Esophagus muscularis mucosa (tissue), 4 donors: ENCODE measurements at regions of chr6 and their contacts with region 1.

Region 1: GRCh38 chr6:85923013-85923430 is 280.3 kb upstream of the SYNCRIP start:
- DNase-seq: no peak
- H3K4me3 ChIP-seq: no peak overlapping the region
- H3K27ac ChIP-seq: no peak overlapping the region
- H3K4me1 ChIP-seq: peaks cover 0 to 25% (median 15%) of the 10 kb centered on the region in 4 donors
- H3K27me3 ChIP-seq: no peaks in the 10 kb centered on the region
- CTCF ChIP-seq: peak; percentile 51 to 75 (median 60)
- EP300 ChIP-seq: no peak
- POLR2A ChIP-seq: no peak

Region 2: GRCh38 chr6:85186546-85187175 is 736.4 kb before region 1 on chr6:
- intact Hi-C with region 1: no loop called
- DNase-seq: no peak
- H3K4me3 ChIP-seq: no peak overlapping the region
- H3K27ac ChIP-seq: no peak overlapping the region
- H3K4me1 ChIP-seq: no peaks in the 10 kb centered on the region
- H3K27me3 ChIP-seq: no peaks in the 10 kb centered on the region
- CTCF ChIP-seq: no peak
- EP300 ChIP-seq: no peak
- POLR2A ChIP-seq: no peak

Region 3: DNA sequence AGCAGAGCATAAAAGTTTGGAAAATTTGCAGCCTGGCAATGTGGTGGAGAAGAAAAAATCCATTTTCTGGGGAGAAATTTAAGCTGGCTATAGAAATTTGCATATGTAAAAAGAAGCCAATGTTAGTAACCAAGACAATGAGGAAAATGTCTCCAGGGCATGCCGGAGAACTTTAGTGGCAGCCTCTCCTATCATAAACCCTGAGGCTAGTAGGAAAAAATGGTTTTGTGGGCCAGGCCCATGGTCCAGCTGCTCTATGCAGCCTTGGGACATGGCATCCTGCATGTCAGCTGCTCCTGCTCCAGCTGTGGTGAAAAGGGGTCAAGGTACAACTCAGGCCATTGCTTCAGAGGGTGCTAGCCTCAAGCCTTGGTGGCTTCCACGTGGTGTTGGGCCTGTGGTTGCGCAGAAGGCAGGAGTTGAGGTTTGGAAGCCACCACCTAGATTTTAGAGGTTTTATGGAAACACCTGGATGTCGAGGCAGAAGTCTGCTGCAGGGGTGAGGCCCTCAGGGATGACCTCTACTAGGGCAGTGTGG is 178.5 kb before region 1 on chr6:
- intact Hi-C with region 1: no loop called
- DNase-seq: no peak
- H3K4me3 ChIP-seq: no peak overlapping the region
- H3K27ac ChIP-seq: no peak overlapping the region
- H3K4me1 ChIP-seq: no peaks in the 10 kb centered on the region
- H3K27me3 ChIP-seq: no peaks in the 10 kb centered on the region
- CTCF ChIP-seq: no peak
- EP300 ChIP-seq: no peak
- POLR2A ChIP-seq: no peak

Region 4: GRCh38 chr6:86031713-86032112 is 108.7 kb after region 1 on chr6:
- intact Hi-C with region 1: no loop called
- DNase-seq: no peak
- H3K4me3 ChIP-seq: no peak overlapping the region
- H3K27ac ChIP-seq: no peak overlapping the region
- H3K4me1 ChIP-seq: peaks cover 0 to 18% (median 8%) of the 10 kb centered on the region in 4 donors
- H3K27me3 ChIP-seq: no peaks in the 10 kb centered on the region
- CTCF ChIP-seq: no peak
- EP300 ChIP-seq: no peak
- POLR2A ChIP-seq: no peak

Region 5: DNA sequence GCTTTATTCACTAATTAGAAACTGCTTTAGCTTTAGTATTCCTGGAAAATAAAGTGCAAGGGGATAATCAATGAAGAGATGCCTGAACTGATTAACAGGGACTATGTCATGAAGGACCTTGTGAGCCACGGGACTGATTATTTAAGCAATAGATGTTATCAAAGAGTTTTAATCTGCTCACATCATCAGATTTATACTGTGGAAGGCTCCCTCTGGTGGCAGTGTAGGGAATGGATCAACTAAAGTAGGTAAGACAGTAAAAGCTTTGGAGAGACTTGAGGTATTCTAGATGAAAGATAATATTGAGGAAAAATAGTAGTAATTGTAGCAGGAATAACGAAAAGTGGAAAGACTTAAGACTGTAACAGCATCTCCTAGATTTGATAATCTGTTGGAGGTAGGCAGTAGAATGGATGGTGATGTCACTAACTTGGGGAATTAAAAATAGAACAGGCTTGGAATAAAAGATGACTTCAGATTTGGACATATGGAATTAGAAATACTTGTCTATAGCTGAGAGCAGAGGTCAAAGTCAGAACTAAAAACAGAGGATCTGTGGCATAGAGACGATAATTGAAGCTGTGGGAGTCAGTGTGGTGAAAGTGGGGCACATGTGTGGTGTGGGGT is 934.0 kb after region 1 on chr6:
- intact Hi-C with region 1: loop called (anchors 2 kb)
- DNase-seq: no peak
- H3K4me3 ChIP-seq: no peak overlapping the region
- H3K27ac ChIP-seq: no peak overlapping the region
- H3K4me1 ChIP-seq: peaks cover 0 to 12% (median 3%) of the 10 kb centered on the region in 4 donors
- H3K27me3 ChIP-seq: no peaks in the 10 kb centered on the region
- CTCF ChIP-seq: peak; percentile 54 to 76 (median 73)
- EP300 ChIP-seq: no peak
- POLR2A ChIP-seq: no peak

Region 6: GRCh38 chr6:86937219-86938079 is 1014.4 kb after region 1 on chr6 and contains the start of gene HTR1E:
- intact Hi-C with region 1: loop called (anchors 2 kb)
- DNase-seq: peak; percentile 91
- H3K4me3 ChIP-seq: peak within 1 kb of the TSS; percentile 48 to 61 (median 51)
- H3K27ac ChIP-seq: peak within 1 kb of the TSS in 1 of 4 donors; percentile 6
- H3K4me1 ChIP-seq: peaks cover 0 to 16% (median 14%) of the 10 kb centered on the region in 4 donors
- H3K27me3 ChIP-seq: peaks cover 0 to 33% (median 0%) of the 10 kb centered on the region in 4 donors
- CTCF ChIP-seq: peak; percentile 40 to 68 (median 46)
- EP300 ChIP-seq: no peak
- POLR2A ChIP-seq: no peak
- total RNA-seq, gene HTR1E: 0.17 to 0.40 (median 0.19) TPM in 3 of 4 donors, not detected in the other

Region 7: DNA sequence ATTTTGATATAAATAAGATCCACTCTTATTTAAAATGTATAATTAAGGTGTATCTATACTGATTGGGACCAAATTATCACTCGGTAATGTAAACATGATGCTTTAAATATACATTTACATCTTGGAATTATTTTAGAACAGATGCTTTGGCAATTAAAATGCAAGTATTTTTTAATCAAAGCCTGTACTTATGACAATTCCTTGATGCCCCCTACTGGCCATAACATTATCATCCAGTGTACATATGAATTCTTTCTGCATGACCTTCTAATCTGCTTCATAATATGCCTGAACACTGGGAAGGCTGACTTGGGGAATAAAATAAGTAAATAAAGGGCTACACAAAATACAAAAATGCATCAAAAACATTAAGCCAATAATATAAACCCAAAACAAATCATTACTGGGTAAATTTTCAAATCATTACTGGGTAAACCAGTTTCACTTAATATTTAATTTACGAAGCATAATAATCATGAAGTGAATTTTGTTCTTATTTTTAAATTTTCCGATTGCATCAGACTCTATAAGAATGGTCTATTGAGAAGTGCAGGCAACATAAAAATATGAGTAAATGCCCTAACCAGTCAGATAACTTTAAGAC is 1106.8 kb after region 1 on chr6:
- intact Hi-C with region 1: loop called (anchors 10 kb)
- DNase-seq: no peak
- H3K4me3 ChIP-seq: no peak overlapping the region
- H3K27ac ChIP-seq: no peak overlapping the region
- H3K4me1 ChIP-seq: no peaks in the 10 kb centered on the region
- H3K27me3 ChIP-seq: no peaks in the 10 kb centered on the region
- CTCF ChIP-seq: peak; percentile 26 to 57 (median 50)
- EP300 ChIP-seq: no peak
- POLR2A ChIP-seq: no peak